PC-9 (cell line): ENCODE measurements at regions of chr3 and their contacts with region 1.

Region 1: GRCh38 chr3:57199895-57200297 is at the start of gene HESX1:
- DNase-seq: no peak
- H3K4me3 ChIP-seq: no peak within 1 kb of the TSS
- H3K27ac ChIP-seq: no peak within 1 kb of the TSS
- H3K4me1 ChIP-seq: peaks cover 15% of the 10 kb centered on the region
- H3K27me3 ChIP-seq: no peaks in the 10 kb centered on the region
- CTCF ChIP-seq: no peak
- total RNA-seq, gene HESX1: 3.4 and 4.4 TPM in 2 replicates

Region 2: DNA sequence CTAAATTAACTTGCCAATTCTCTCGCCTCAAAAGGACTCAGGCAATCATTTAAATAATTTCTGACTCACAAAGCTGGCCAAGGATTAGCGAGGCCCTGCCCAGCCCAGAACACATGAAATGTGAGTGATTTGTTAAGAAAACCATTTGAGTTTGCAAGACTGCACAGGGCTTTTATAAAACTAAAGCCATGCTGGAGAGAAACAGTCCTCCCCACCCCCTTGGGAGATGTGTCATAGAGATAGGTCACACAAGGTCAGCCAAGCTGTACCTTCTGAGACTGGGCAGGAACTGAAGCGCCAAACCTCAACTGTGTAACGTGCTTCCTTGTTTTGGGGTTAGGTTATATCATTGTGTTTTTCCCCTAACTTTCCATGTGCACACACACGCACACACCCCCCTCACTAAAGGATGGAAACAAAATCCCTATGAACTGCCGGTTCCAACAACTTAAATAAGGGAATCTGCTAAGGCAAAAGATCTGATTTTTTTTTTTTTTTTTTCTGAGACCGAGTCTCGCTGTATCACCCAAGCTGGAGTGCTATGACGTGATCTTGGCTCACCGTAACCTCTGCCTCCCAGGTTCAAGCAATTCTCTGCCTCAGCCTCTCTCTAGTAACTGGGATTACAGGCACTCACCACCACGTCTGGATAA is 131.3 kb before region 1 on chr3:
- CTCF ChIA-PET with region 1: no interaction called
- POLR2A ChIA-PET with region 1: interaction called, 23 read pairs
- intact Hi-C with region 1: no loop called
- DNase-seq: peak; percentile 78 to 97
- H3K4me3 ChIP-seq: peak overlapping the region; percentile 38; the same call in 1 of the 2 replicates
- H3K27ac ChIP-seq: peak overlapping the region; percentile 91
- H3K4me1 ChIP-seq: peaks cover 60% of the 10 kb centered on the region
- H3K27me3 ChIP-seq: no peaks in the 10 kb centered on the region
- CTCF ChIP-seq: no peak

Region 3: GRCh38 chr3:57100046-57100695 is 99.7 kb before region 1 on chr3:
- CTCF ChIA-PET with region 1: interaction called, 5 read pairs
- POLR2A ChIA-PET with region 1: interaction called, 19 read pairs
- intact Hi-C with region 1: no loop called
- DNase-seq: peak; percentile 48 to 63
- H3K4me3 ChIP-seq: no peak overlapping the region
- H3K27ac ChIP-seq: 0 out of 2 replicates have a peak overlapping the region, but pooled peaks have one; percentile 62
- H3K4me1 ChIP-seq: peaks cover 20% of the 10 kb centered on the region
- H3K27me3 ChIP-seq: no peaks in the 10 kb centered on the region
- CTCF ChIP-seq: peak; percentile 85

Region 4: GRCh38 chr3:57179580-57180410 is 20.1 kb before region 1 on chr3:
- CTCF ChIA-PET with region 1: interaction called, 14 read pairs
- POLR2A ChIA-PET with region 1: no interaction called
- intact Hi-C with region 1: no loop called
- DNase-seq: no peak
- H3K4me3 ChIP-seq: no peak overlapping the region
- H3K27ac ChIP-seq: no peak overlapping the region
- H3K4me1 ChIP-seq: no peaks in the 10 kb centered on the region
- H3K27me3 ChIP-seq: no peaks in the 10 kb centered on the region
- CTCF ChIP-seq: peak; percentile 50